Heart right ventricle (tissue), 16 donors: ENCODE measurements at regions of chr4 and their contacts with region 1.

Region 1: GRCh38 chr4:122922877-122923511 is 597 bp upstream of the NUDT6 start:
- DNase-seq: peak; percentile 82 to 86
- ATAC-seq: peak; percentile 96 to 99 (median 98)
- H3K4me3 ChIP-seq: peak overlapping the region; percentile 64 to 95 (median 92)
- H3K27ac ChIP-seq: peak overlapping the region in 9 of 10 donors; percentile 69 to 90 (median 82)
- H3K4me1 ChIP-seq: peaks cover 0 to 25% (median 17%) of the 10 kb centered on the region in 9 donors
- H3K27me3 ChIP-seq: no peaks in the 10 kb centered on the region
- CTCF ChIP-seq: peak in 1 of 9 donors; percentile 12

Region 2: GRCh38 chr4:122732329-122733026 is 190.5 kb before region 1 on chr4 and contains the start of gene BBS12:
- intact Hi-C with region 1: loop called in 2 of 10 experiments (anchors 1 to 2 kb)
- DNase-seq: peak; percentile 97 to 99
- ATAC-seq: peak; percentile 99 to 100 (median 99)
- H3K4me3 ChIP-seq: peak within 1 kb of the TSS; percentile 23 to 84 (median 70)
- H3K27ac ChIP-seq: peak within 1 kb of the TSS in 9 of 10 donors; percentile 52 to 87 (median 81)
- H3K4me1 ChIP-seq: peaks cover 3 to 31% (median 12%) of the 10 kb centered on the region in 9 donors
- H3K27me3 ChIP-seq: no peaks in the 10 kb centered on the region
- CTCF ChIP-seq: peak in 7 of 9 donors; percentile 14 to 65 (median 44)
- total RNA-seq, gene BBS12: 3.3 to 13.3 (median 5.2) TPM

Region 3: GRCh38 chr4:122968227-122968812 is 45.3 kb after region 1 on chr4:
- intact Hi-C with region 1: no loop called
- DNase-seq: no peak
- ATAC-seq: no peak
- H3K4me3 ChIP-seq: no peak overlapping the region
- H3K27ac ChIP-seq: no peak overlapping the region
- H3K4me1 ChIP-seq: no peaks in the 10 kb centered on the region
- H3K27me3 ChIP-seq: no peaks in the 10 kb centered on the region
- CTCF ChIP-seq: no peak